ENCODE measurements at regions of chr2 and their contacts with region 1.

Region 1: GRCh38 chr2:9769171-9770005 is 73.9 kb upstream of the TAF1B start:
- DNase-seq: no peak
- ATAC-seq: no peak
- H3K4me3 ChIP-seq: no peak overlapping the region
- H3K27ac ChIP-seq: no peak overlapping the region
- H3K4me1 ChIP-seq: peaks cover 15% of the 10 kb centered on the region
- H3K27me3 ChIP-seq: no peaks in the 10 kb centered on the region
- CTCF ChIP-seq: no peak

Region 2: DNA sequence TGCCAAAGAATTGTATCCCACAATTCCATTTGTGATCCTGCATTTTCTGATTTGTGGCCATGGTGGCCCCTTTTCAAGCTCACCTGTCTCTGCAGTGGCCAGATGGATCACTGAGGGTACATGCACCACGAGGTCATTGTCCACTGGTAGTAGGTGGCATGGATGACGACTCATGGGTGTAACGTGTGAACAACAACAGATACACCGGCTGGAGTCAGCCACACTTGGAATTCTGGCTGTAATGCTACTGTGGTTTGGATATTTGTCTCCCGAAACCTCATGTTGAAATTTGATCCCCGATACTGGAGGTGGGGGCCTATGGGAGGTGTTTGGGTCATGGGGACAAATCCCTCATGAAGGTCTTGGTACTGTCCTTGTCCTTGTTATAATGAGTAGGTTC is 28.3 kb before region 1 on chr2:
- CTCF ChIA-PET with region 1: interaction called, 10 read pairs
- POLR2A ChIA-PET with region 1: no interaction called
- in situ Hi-C with region 1: no loop called
- intact Hi-C with region 1: no loop called
- DNase-seq: no peak
- ATAC-seq: no peak
- H3K4me3 ChIP-seq: no peak overlapping the region
- H3K27ac ChIP-seq: no peak overlapping the region
- H3K4me1 ChIP-seq: peaks cover 4% of the 10 kb centered on the region; the same call in 1 of the 2 replicates
- H3K27me3 ChIP-seq: no peaks in the 10 kb centered on the region
- CTCF ChIP-seq: no peak

Measured in Panc1 (cell line).